GM12878 (cell line): ENCODE measurements at regions of chrX and their contacts with region 1.

Region 1: GRCh38 chrX:119398974-119399771 is at the start of gene SLC25A43:
- DNase-seq: no peak
- ATAC-seq: peak; percentile 96
- H3K4me3 ChIP-seq: peak within 1 kb of the TSS; percentile 72
- H3K27ac ChIP-seq: peak within 1 kb of the TSS; percentile 41
- H3K4me1 ChIP-seq: no peaks in the 10 kb centered on the region
- H3K27me3 ChIP-seq: no peaks in the 10 kb centered on the region
- CTCF ChIP-seq: no peak
- EP300 ChIP-seq: no peak
- POLR2A ChIP-seq: peak; percentile 84
- RAD21 ChIP-seq: no peak
- polyA plus RNA-seq, gene SLC25A43: 2.5 to 3.0 TPM

Region 2: DNA sequence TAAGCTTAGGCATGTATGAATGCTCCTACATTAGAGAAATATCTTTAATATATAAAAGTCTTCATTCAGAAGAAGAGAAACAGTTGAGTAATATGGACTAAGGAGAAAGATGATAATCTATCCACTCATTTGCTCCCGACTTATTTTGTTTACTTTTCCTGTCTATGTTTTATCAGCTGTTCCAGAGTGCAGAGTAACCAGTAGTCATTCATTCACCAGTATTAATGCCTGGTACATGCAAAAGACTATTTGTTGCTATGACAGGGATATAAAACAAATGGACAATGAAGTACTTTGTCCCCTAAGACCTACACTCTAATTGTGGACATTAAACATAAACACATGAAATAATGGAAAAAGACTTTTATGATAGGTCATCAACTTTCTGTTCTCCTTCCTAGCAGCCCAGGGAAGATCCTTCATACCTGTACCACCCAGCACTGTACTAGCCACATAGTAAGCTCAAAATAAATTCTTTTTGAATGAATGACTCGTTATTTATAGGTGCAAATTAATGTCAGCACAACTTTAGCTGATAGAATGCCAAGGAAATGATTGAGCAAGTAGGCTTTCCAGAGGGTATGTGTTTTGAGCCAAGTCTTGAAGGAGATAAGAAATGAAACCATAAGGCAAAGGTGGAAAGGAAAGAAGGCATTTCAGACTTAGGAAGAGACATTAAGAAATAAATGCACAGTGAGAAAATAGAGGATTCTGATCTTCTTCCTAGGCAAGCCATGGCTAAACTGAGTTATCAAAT is 716.7 kb before region 1 on chrX:
- CTCF ChIA-PET with region 1: no interaction called
- POLR2A ChIA-PET with region 1: no interaction called
- RAD21 ChIA-PET with region 1: no interaction called
- SMC1A ChIA-PET with region 1: no interaction called
- in situ Hi-C with region 1: no loop called
- intact Hi-C with region 1: no loop called
- DNase-seq: no peak
- ATAC-seq: no peak
- H3K4me3 ChIP-seq: no peak overlapping the region
- H3K27ac ChIP-seq: no peak overlapping the region
- H3K4me1 ChIP-seq: no peaks in the 10 kb centered on the region
- H3K27me3 ChIP-seq: no peaks in the 10 kb centered on the region
- CTCF ChIP-seq: no peak
- EP300 ChIP-seq: no peak
- POLR2A ChIP-seq: no peak
- RAD21 ChIP-seq: no peak

Region 3: GRCh38 chrX:119468930-119469635 is 69.9 kb after region 1 on chrX:
- CTCF ChIA-PET with region 1: interaction called, 3 read pairs
- POLR2A ChIA-PET with region 1: interaction called, 6 read pairs
- RAD21 ChIA-PET with region 1: interaction called, 3 read pairs
- SMC1A ChIA-PET with region 1: interaction called, 3 read pairs
- in situ Hi-C with region 1: no loop called
- intact Hi-C with region 1: loop called (anchors 1 kb)
- DNase-seq: peak; percentile 35
- ATAC-seq: peak; percentile 84
- H3K4me3 ChIP-seq: peak overlapping the region; percentile 81
- H3K27ac ChIP-seq: peak overlapping the region; percentile 82
- H3K4me1 ChIP-seq: no peaks in the 10 kb centered on the region; the same call in 1 of the 2 replicates
- H3K27me3 ChIP-seq: no peaks in the 10 kb centered on the region
- CTCF ChIP-seq: peak; percentile 61 to 81 (median 64); a peak in 5 of 6 replicates
- EP300 ChIP-seq: no peak
- POLR2A ChIP-seq: no peak; the same call in 1 of the 2 replicates
- RAD21 ChIP-seq: peak; percentile 56